ENCODE measurements at regions of chr5 and their contacts with region 1.

Region 1: GRCh38 chr5:1799602-1800471 is at the start of gene MRPL36:
- DNase-seq: peak; percentile 93 to 94
- H3K4me3 ChIP-seq: peak within 1 kb of the TSS; percentile 58 to 83
- H3K27ac ChIP-seq: peak within 1 kb of the TSS; percentile 58 to 81
- H3K4me1 ChIP-seq: peaks cover 0 to 32% (median 17%) of the 10 kb centered on the region in 4 donors
- H3K27me3 ChIP-seq: no peaks in the 10 kb centered on the region
- CTCF ChIP-seq: no peak

Region 2: DNA sequence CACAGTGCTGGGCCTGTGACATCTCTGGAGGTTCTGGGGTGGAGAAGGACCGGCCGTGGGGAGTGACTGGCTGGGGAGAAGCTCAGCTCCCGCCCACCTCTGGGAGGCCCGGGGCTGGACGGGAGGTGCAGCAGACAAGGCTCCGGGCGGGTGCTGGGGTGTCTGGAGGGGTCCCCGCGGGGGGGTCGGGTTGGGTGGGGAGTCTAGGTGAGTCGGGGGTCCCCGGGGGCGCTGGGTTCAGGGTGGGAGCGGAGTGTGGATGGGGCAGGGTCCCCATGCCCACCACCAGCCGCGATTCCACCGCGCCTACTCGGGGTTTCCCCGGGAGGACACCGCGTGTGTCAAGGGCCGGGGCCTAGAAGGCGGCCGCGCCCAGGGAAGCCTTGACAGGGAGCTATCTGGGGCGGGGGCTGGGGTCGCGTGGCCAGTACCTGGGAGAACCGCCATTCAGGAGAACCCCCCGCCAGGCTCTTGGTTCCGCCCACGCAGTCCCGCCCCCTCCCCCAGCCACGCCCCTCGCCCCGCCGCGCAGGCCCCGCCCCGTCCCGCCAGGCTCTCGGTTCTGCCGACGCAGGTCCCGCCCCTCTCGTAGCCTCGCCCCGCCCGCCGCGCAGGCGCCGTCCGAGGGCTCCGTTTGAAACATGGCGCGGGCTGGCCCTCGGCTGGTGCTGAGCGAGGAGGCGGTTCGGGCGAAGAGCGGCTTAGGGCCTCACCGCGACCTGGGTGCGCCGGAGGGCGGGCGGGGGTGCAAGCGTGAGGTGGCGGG is 1187.9 kb before region 1 on chr5 and contains the start of gene CEP72:
- intact Hi-C with region 1: loop called (anchors 10 kb)
- DNase-seq: peak; percentile 80 to 94
- H3K4me3 ChIP-seq: peak within 1 kb of the TSS; percentile 69 to 77
- H3K27ac ChIP-seq: peak within 1 kb of the TSS; percentile 14 to 32
- H3K4me1 ChIP-seq: peaks cover 0 to 25% (median 9%) of the 10 kb centered on the region in 4 donors
- H3K27me3 ChIP-seq: peaks cover 0 to 16% of the 10 kb centered on the region in 2 donors
- CTCF ChIP-seq: no peak

Region 3: DNA sequence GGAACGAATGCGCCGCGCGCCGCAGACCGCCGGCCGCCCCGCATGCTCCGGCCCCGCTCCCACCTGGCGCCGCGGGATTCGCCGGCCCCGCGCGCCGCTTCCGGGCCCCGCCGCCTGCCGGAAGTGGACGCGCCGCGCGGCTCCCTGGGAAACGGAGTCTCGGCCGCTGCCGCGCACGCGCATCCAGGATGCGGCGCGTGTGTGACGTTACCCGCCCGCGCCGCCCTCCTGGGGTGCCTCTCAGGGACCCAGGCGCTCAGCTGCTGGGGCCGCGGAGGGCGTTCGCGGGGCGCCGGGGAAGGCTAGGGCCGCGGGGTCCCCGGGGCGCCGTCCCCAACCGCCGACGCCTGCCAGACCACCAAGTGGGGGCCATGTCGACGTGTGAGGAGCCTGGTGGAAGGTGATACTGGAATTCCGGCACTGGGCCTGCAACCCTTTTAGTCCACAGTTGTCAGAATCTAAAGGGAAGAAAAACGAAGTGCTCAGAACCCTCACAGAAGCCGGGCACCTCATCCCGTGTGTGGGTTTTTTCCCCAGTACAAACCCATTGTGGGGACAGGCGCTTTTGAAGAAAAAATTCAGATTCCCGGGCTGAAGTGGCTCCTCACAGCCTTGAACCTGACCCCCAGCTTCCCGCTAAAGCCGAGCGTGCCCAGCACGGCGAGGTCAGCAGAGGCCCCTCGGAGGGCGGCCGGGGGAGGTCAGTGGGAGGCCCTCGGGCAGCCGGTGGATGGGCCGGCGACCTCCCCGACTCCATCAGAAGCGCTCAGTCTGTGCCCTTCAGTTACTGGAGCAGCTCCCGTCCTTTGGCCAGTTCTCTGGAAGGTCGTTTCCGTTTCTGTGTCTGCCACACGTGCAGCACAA is 454.6 kb before region 1 on chr5 and contains the start of gene CLPTM1L:
- intact Hi-C with region 1: loop called (anchors 10 kb)
- DNase-seq: peak; percentile 76 to 92
- H3K4me3 ChIP-seq: peak within 1 kb of the TSS; percentile 80 to 92
- H3K27ac ChIP-seq: peak within 1 kb of the TSS; percentile 81 to 84
- H3K4me1 ChIP-seq: peaks cover 0 to 24% (median 22%) of the 10 kb centered on the region in 4 donors
- H3K27me3 ChIP-seq: no peaks in the 10 kb centered on the region
- CTCF ChIP-seq: peak in 1 of 2 experiments; percentile 51

Region 4: GRCh38 chr5:1874771-1875220 is 75.0 kb after region 1 on chr5:
- intact Hi-C with region 1: no loop called
- DNase-seq: no peak
- H3K4me3 ChIP-seq: no peak overlapping the region
- H3K27ac ChIP-seq: no peak overlapping the region
- H3K4me1 ChIP-seq: peaks cover 0 to 20% (median 14%) of the 10 kb centered on the region in 4 donors
- H3K27me3 ChIP-seq: peaks cover 0 to 85% of the 10 kb centered on the region in 2 donors
- CTCF ChIP-seq: no peak

Region 5: GRCh38 chr5:2366816-2367215 is 567.0 kb after region 1 on chr5:
- intact Hi-C with region 1: no loop called
- DNase-seq: no peak
- H3K4me3 ChIP-seq: no peak overlapping the region
- H3K27ac ChIP-seq: no peak overlapping the region
- H3K4me1 ChIP-seq: no peaks in the 10 kb centered on the region
- H3K27me3 ChIP-seq: no peaks in the 10 kb centered on the region
- CTCF ChIP-seq: no peak